WTC11 (cell line): ENCODE measurements at regions of chr2 and their contacts with region 1.

Region 1: DNA sequence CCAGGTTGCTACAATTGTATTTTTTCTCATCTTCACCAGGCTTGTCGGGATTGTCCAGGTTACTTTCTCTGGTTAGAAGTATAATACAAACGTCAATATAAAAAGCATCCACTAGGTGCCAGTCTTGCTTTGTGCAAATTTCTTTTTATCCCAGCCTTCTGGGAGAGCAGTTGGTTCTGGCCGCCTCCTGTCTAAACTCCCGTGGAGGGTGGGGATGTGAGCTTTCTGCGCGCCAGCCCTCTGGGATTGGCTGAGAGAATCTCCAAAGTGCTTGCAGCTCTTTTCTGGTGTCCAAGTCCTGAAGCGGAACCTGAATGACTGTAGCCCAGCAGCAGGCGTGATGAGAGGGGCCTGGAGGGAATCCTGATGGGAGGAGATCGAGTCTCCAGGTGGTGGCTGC is 22.4 kb upstream of the TOGARAM2 start:
- DNase-seq: peak; percentile 58
- ATAC-seq: peak; percentile 50
- H3K4me3 Mint-ChIP-seq: no peak overlapping the region
- H3K27ac Mint-ChIP-seq: no peak overlapping the region
- H3K4me1 Mint-ChIP-seq: peaks cover 25% of the 10 kb centered on the region
- H3K27me3 Mint-ChIP-seq: no peaks in the 10 kb centered on the region
- CTCF ChIP-seq: peak; percentile 47

Region 2: GRCh38 chr2:28927878-28928277 is 30.8 kb before region 1 on chr2:
- CTCF ChIA-PET with region 1: no interaction called
- POLR2A ChIA-PET with region 1: no interaction called
- DNase-seq: no peak
- ATAC-seq: no peak
- H3K4me3 Mint-ChIP-seq: no peak overlapping the region
- H3K27ac Mint-ChIP-seq: no peak overlapping the region
- H3K4me1 Mint-ChIP-seq: no peaks in the 10 kb centered on the region
- H3K27me3 Mint-ChIP-seq: no peaks in the 10 kb centered on the region
- CTCF ChIP-seq: no peak

Region 3: DNA sequence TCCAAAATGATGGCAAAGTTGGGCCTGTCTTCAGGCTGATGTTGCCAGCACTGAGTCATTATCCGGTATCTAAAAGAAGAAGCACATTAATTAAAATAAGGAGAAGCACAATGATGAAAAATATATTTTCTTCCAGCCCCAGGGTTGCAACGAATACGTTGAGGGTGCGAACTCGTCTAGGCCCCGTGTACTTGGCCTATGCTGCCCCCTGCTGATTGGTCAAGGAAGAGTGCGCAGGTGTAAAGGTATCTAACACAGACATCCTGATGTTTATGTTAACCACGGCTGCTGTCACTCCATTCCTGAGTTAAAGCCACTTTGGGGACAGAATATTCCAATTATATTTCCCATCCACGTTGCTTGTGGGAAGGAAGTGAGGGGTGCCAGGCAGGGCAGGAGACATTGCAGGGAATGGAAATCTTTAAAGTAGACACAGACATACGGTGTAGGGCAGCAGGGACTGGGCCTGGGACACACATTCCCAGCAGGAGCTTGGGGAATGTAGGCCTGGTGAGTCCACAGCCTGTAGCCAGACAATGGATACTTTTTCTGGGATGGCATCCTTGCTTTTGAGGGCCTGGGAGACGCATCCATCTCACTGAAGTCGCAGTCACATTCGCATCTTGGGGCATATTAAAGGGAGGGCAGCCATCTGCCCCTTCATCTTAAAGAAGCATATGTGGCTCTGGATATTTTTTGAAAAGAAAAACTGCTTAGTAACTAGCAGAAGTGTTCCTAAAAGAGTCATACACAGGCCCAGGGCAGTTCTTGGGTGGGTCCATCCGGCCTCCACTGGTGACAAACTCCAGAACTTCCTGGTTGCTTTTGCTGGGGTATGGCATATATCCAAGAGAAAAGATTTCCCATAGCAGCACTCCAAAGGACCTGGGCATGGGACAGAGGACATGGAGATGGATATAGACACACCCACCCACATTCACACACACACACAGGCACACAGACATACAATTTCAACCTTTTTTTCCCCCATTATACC is 238.4 kb after region 1 on chr2:
- CTCF ChIA-PET with region 1: interaction called, 14 read pairs
- POLR2A ChIA-PET with region 1: no interaction called
- DNase-seq: peak; percentile 82
- ATAC-seq: peak; percentile 95
- H3K4me3 Mint-ChIP-seq: no peak overlapping the region
- H3K27ac Mint-ChIP-seq: no peak overlapping the region
- H3K4me1 Mint-ChIP-seq: peaks cover 9% of the 10 kb centered on the region
- H3K27me3 Mint-ChIP-seq: peaks cover 4% of the 10 kb centered on the region
- CTCF ChIP-seq: peak; percentile 67